IMR-90 (cell line): ENCODE measurements at regions of chr5 and their contacts with region 1.

Region 1: DNA sequence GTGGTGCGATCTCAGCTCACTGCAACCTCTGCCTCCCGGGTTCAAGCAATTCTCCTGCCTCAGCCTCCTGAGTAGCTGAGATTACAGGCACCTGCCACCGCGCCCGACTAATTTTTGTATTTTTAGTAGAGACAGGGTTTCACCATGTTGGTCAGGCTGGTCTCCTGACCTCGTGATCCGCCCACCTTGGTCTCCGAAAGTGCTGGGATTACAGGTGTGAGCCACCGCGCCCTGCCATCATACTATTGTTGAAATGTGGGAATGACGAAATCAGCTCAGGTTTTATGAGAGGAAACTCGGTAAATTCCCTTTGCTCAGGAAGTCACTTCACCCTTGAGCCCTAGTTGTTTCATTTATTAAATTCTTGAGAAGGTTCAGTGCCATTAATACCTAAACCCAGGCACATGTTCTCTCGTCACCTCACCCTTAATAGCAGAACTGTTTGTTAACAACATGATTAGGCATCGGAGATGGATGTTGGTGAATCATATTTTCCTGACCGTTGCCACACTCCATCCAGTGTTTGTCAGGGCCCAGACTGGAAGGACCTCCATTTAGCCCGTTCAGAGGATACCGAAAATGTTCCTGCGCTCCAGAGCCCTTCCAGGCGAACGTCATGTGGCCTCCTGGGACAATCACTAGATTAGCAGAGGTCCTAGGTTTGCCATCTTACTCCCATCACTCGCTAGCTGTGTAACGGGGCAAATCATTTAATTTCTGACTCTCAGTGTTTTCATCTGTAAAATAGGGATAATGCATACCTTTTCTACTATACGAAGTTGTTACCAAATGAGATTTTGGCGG is 20.0 kb upstream of the CREBRF start:
- DNase-seq: no peak
- ATAC-seq: no peak
- H3K4me3 ChIP-seq: no peak overlapping the region
- H3K27ac ChIP-seq: peak overlapping the region; percentile 73; the same call in 1 of the 2 replicates
- H3K4me1 ChIP-seq: peaks cover 9% of the 10 kb centered on the region
- H3K27me3 ChIP-seq: no peaks in the 10 kb centered on the region
- CTCF ChIP-seq: no peak
- POLR2A ChIP-seq: no peak
- RAD21 ChIP-seq: no peak

Region 2: GRCh38 chr5:171669571-171669970 is 1366.5 kb before region 1 on chr5:
- CTCF ChIA-PET with region 1: no interaction called
- POLR2A ChIA-PET with region 1: interaction called, 15 read pairs
- dilution Hi-C with region 1: no loop called
- in situ Hi-C with region 1: no loop called
- intact Hi-C with region 1: no loop called
- DNase-seq: no peak
- ATAC-seq: no peak
- H3K4me3 ChIP-seq: no peak overlapping the region
- H3K27ac ChIP-seq: no peak overlapping the region
- H3K4me1 ChIP-seq: 0 out of 2 replicates have a peak, but pooled peaks cover 2% of the 10 kb centered on the region
- H3K27me3 ChIP-seq: peaks cover 8% of the 10 kb centered on the region
- CTCF ChIP-seq: no peak
- POLR2A ChIP-seq: no peak
- RAD21 ChIP-seq: no peak